Ovary (tissue), 10 donors: ENCODE measurements at regions of chr20 and their contacts with region 1.

Region 1: GRCh38 chr20:46089417-46090388 is at the start of gene NCOA5:
- DNase-seq: peak; percentile 95 to 98 (median 96)
- H3K4me3 ChIP-seq: peak within 1 kb of the TSS; percentile 94
- H3K27ac ChIP-seq: peak within 1 kb of the TSS; percentile 89 to 99
- H3K4me1 ChIP-seq: peaks cover 11% of the 10 kb centered on the region
- H3K27me3 ChIP-seq: no peaks in the 10 kb centered on the region
- CTCF ChIP-seq: peak in 2 of 3 donors; percentile 60 to 72
- EP300 ChIP-seq: no peak
- POLR2A ChIP-seq: peak; percentile 98
- total RNA-seq, gene NCOA5: 27.6 to 51.1 (median 37.4) TPM

Region 2: DNA sequence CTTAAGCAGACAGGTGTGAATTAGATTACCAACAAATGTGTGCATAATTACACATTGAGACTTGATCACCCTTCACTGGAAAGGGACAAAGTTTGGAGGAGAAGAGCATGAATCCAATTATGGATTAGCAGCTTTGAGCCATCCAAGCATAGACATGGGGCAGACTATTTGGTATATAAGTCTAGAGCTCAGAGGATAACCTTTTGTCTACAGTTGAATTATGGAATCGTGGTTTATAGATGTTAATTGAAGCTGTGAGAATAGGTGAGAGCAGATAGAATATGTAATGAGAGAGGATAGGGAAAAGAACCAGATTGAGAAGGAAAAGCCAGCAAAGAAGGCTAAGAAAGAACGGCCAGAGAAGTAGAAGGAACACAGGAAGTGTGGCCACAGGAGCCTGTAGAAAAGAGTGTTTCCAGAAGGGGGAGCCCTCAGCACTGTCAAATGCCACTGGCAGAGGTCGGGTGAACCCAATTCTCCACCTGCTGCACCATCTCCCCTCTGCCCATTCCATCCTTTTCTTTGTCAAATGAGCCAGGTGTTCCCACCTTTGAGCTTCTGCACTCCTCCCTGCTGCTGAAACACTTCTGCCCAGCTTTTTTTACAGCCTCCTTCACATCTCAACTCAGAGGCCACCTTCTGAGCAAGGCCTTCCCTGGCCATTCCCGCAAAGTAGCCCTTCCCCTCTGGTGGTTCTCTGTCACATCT is 290.6 kb before region 1 on chr20:
- intact Hi-C with region 1: loop called in 1 of 4 experiments (anchors 10 kb)
- DNase-seq: peak in 4 of 5 donors; percentile 52 to 67 (median 57)
- H3K4me3 ChIP-seq: no peak overlapping the region
- H3K27ac ChIP-seq: peak overlapping the region in 1 of 2 donors; percentile 45
- H3K4me1 ChIP-seq: no peaks in the 10 kb centered on the region
- H3K27me3 ChIP-seq: no peaks in the 10 kb centered on the region
- CTCF ChIP-seq: peak; percentile 22 to 40 (median 34)
- EP300 ChIP-seq: no peak
- POLR2A ChIP-seq: no peak

Region 3: DNA sequence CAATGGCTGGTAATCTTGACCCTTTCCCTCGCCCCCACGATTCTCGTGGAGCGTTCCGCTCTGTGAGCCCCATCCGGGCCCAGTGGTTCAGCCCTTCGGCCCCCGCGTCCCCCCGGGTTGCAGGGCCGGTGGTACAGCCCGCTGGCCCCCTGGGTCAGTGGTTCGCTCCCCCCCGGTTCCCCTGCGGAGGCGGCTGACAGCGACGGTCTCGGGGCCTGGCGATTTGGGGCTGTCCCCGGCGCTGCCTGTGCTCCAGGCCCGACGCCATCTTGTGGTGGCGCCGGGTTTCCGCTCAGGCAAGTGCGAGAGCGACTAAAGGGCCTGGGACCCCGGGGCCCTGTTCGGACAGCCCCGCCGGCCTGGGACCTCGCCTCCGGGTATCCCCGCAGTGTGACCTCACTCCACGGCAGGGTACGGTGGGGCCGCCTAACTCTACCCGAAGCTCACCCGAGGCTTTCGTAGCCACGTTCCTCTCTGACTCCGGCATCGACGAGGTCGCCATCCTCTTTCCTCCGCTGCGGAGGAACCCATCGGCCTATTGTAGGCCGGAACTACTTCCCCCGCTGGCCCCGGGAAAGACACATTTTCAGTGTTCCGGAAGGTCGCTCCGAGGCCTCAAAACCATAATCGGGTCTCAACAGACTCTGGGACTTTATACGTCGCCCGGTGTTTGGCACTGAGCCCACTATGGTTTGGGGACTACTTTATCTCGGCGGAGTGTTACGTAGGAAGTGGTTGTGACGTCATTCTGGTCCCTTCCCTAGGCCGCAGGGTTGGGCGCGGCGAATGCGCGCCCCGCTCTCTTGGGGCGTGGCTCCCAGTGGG is 117.8 kb before region 1 on chr20 and contains the start of gene ZNF335:
- intact Hi-C with region 1: loop called in 1 of 4 experiments (anchors 10 kb)
- DNase-seq: peak; percentile 95 to 98 (median 96)
- H3K4me3 ChIP-seq: peak within 1 kb of the TSS; percentile 70
- H3K27ac ChIP-seq: peak within 1 kb of the TSS; percentile 98 to 100
- H3K4me1 ChIP-seq: peaks cover 4% of the 10 kb centered on the region
- H3K27me3 ChIP-seq: no peaks in the 10 kb centered on the region
- CTCF ChIP-seq: peak; percentile 31 to 86 (median 82)
- EP300 ChIP-seq: peak; percentile 69
- POLR2A ChIP-seq: peak; percentile 64
- total RNA-seq, gene ZNF335: 14.2 to 25.7 (median 20.0) TPM

Region 4: DNA sequence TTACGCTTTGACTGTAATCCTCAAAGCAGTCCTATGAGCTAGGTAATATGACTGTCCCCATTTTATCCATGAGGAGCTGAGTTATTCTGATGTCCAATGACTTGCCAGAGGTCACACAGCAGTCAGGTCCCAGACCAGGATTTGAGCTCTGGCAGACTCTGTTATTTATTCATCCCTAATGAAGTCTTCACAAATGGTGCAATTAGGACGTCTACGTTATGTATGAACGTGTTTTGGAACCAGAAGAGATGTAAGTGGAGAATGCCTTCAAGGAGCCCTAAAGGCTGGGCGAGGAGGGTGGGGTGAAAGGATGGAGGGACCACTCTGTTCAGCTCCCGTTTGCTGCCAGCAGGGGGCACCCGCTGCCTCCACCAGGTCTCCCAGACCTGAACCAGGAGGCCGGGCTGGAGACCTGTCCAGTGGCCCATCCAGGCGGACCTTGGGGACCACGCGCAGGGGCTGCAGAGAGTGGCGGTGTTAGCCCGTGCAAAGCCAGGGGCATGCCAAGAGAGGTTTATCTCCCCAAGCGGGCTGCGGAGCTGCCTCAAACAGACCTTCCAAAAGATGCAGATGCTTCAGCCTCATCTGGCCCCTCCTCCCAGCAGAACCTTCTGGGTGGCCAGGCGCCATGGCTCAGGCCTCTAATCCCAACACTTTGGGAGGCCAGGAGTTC is 102.5 kb before region 1 on chr20:
- intact Hi-C with region 1: loop called in 1 of 4 experiments (anchors 10 kb)
- DNase-seq: peak in 4 of 5 donors; percentile 60 to 77 (median 62)
- H3K4me3 ChIP-seq: no peak overlapping the region
- H3K27ac ChIP-seq: no peak overlapping the region
- H3K4me1 ChIP-seq: no peaks in the 10 kb centered on the region
- H3K27me3 ChIP-seq: no peaks in the 10 kb centered on the region
- CTCF ChIP-seq: peak in 1 of 3 donors; percentile 28
- EP300 ChIP-seq: no peak
- POLR2A ChIP-seq: no peak

Region 5: DNA sequence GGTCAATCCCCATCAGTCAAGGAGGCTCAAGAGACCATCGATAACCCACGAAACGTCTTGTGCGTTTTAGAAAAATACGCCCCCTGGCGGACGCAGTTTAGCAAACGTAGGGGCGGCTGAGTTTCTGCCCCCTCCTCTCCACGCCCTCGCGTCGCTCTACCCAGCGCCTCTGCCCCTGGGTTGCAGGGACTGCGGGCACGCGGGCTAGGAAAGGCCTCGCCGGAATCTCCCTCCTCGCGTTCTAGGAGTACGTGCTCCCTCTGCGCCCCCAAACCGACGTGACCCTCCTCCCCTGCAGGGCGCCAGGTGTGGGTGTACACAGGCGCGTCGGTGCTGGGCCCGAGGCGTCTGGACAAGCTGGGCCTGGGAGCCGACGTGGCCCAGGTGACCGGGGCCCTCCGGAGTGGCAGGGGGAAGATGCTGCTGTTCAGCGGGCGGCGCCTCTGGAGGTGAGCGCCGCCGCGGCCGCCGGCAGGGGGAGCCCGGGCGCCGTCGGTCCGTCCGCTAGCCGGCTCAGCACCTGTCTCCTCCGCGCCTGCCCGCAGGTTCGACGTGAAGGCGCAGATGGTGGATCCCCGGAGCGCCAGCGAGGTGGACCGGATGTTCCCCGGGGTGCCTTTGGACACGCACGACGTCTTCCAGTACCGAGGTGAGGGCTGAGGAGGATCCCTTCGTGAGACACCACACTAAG is 75.7 kb before region 1 on chr20:
- intact Hi-C with region 1: loop called in 1 of 4 experiments (anchors 5 kb)
- DNase-seq: peak; percentile 22 to 70 (median 41)
- H3K4me3 ChIP-seq: no peak overlapping the region
- H3K27ac ChIP-seq: no peak overlapping the region
- H3K4me1 ChIP-seq: no peaks in the 10 kb centered on the region
- H3K27me3 ChIP-seq: peaks cover 5% of the 10 kb centered on the region
- CTCF ChIP-seq: peak; percentile 8 to 69 (median 52)
- EP300 ChIP-seq: no peak
- POLR2A ChIP-seq: no peak